GM12878 (cell line): ENCODE measurements at regions of chrX and their contacts with region 1.

Region 1: DNA sequence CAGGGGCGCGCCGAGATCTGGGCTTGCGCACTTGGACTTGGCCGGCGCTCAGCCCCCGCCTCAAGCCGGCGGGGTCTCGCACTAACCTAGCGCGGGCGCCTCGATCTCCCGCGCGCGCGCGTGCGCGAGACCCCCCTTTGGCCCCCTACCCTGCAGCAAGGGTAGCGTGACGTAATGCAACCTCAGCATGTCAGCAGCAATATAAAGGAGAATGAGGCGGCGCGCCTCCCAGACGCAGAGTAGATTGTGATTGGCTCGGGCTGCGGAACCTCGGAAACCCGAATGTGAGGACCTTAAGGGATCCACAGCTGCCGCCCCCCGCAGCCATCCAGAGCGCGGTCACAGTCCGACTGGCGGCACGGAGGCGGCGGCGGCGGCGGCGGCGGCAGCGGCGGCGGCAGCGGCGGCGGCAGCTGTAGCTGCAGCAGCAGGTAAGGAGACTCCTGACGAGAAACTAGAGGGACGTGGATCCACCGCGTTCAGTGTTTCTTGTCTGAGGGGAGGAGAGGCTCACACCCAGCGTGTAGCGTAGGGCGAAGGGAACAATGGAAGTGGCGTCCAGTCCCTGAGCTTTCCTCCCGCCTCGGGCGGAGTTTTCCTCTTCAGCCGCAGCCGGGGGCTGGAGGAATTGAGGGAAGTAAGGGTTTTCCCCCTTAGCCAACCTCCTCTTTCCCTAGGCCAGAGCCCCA is at the starts of genes SATL1 and ZNF711:
- DNase-seq: no peak
- ATAC-seq: peak; percentile 80
- H3K4me3 ChIP-seq: peak within 1 kb of the TSS; percentile 75
- H3K27ac ChIP-seq: no peak within 1 kb of the TSS
- H3K4me1 ChIP-seq: no peaks in the 10 kb centered on the region
- H3K27me3 ChIP-seq: no peaks in the 10 kb centered on the region
- CTCF ChIP-seq: no peak
- EP300 ChIP-seq: no peak
- POLR2A ChIP-seq: no peak
- RAD21 ChIP-seq: no peak
- polyA plus RNA-seq, gene SATL1: not detected
- polyA plus RNA-seq, gene ZNF711: 1.00 to 1.4 TPM

Region 2: DNA sequence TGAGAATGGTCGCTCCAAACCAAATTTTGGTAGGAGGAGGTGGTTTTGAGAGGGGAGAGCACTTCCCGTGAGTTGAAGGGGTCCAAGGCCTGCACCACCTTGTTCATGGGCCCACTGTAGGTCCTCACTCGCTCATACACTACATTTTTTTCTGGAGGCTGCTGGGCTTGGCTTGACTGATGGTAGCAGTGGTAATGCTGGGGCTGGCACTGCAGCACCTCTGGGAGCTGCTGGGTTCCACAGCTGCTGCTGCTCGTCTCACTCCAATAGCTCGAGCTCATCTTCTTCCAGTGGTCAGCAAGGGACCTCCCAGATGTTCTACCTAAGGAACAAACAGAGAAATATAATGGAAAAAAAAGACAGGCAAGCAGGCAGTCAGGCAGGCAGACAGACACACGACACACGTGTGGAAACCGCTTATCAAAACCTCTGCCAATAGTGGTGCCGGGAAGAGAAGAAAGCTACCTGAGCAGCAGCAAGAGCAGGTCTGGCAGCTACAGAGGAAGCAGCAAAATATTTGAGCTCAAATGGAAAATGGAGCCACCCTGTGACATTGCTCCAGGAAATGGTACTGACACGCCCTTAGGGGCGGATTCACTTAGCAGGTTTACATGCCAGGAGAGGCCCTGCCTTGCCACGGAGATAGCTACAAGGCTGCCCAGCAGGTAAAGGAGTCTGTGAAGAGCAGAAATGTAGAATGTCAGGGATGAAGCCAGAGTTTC is 135.4 kb after region 1 on chrX and contains the start of gene POF1B:
- CTCF ChIA-PET with region 1: interaction called, 3 read pairs
- POLR2A ChIA-PET with region 1: no interaction called
- RAD21 ChIA-PET with region 1: interaction called, 9 read pairs
- SMC1A ChIA-PET with region 1: interaction called, 5 read pairs
- in situ Hi-C with region 1: no loop called
- intact Hi-C with region 1: loop called (anchors 2 kb)
- DNase-seq: peak; percentile 23
- ATAC-seq: peak; percentile 87
- H3K4me3 ChIP-seq: peak within 1 kb of the TSS; percentile 50
- H3K27ac ChIP-seq: peak within 1 kb of the TSS; percentile 41
- H3K4me1 ChIP-seq: no peaks in the 10 kb centered on the region
- H3K27me3 ChIP-seq: no peaks in the 10 kb centered on the region
- CTCF ChIP-seq: no peak
- EP300 ChIP-seq: no peak
- POLR2A ChIP-seq: no peak
- RAD21 ChIP-seq: no peak
- polyA plus RNA-seq, gene POF1B: 0.14 to 0.27 TPM